OCI-LY7 (cell line): ENCODE measurements at regions of chr17 and their contacts with region 1.

Region 1: GRCh38 chr17:78421484-78422266 is 43.2 kb downstream of the PGS1 start:
- DNase-seq: peak; percentile 76
- H3K4me3 ChIP-seq: no peak overlapping the region
- H3K27ac ChIP-seq: no peak overlapping the region
- H3K4me1 ChIP-seq: no peaks in the 10 kb centered on the region
- CTCF ChIP-seq: peak; percentile 99

Region 2: DNA sequence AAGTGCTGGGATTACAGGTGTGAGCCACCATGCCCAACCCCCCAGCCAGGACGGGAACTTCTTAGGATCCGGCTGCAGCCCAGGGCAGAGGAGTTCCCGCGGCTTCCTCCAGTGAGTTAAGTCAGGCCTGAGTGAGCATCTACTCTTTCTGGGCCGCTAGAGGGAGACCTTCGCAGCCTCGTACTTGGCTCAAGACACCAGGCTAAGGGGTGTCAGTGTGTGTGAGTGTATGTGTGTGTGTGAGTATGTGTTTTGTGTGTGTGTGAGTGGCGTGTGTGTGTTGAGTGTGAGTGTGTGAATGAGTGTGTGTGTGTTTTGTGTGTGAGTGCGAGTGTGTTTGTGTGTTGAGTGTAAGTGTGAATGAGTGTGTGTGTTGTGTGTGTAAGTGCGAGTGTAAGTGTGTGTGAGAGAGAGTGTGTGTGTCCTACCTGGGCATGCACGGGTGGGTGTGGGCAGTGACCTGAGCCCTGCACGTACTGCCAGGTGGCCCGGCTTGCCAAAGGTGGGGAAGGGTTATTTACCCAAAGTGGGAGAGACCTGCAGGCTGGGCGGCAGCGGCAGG is 131.8 kb before region 1 on chr17:
- CTCF ChIA-PET with region 1: no interaction called
- POLR2A ChIA-PET with region 1: no interaction called
- intact Hi-C with region 1: loop called (anchors 1 kb)
- DNase-seq: peak; percentile 87
- H3K4me3 ChIP-seq: no peak overlapping the region
- H3K27ac ChIP-seq: no peak overlapping the region
- H3K4me1 ChIP-seq: no peaks in the 10 kb centered on the region
- CTCF ChIP-seq: peak; percentile 92

Region 3: DNA sequence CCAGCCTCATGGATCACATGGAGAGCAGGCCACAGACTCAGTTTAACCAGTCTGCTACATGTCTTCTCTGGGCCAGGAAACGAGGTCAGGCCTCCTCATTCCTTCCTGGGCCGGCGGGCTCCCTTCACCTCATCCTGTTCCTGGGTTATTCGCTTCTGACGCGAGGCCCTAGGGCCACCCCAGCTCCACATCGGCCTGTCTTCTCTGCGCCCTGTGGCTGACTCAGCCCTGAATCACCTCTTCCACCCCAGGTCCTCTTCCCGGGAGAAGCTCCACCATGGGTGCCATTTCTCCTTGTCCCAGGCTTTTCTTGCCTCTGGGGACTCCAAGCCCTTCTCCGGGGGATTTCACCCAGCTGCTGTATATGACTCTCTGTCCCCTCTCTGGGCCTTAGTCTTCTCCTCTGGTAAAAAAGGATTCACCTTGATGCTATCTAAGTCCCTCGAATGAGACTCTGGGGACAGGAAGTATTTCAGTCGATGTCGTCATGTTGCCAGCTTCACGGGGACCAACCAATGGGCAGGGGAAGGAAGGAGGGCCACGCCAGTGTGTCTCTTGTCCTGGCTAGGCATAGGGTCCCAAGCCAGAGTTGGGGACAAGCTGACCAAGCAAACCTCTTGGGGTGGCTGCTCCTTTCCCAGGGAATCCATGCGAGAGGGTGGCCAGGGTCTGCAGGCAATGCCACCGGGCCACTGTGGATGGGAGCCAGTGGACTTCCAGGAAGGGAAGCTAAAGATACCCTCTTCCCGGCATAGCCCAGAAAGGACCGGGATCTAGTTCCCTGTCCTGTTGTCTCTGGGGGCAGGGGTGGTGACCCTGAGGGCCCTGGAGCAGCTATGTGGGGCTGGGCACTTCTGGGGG is 120.5 kb before region 1 on chr17:
- CTCF ChIA-PET with region 1: no interaction called
- POLR2A ChIA-PET with region 1: interaction called, 10 read pairs
- intact Hi-C with region 1: no loop called
- DNase-seq: no peak
- H3K4me3 ChIP-seq: no peak overlapping the region
- H3K27ac ChIP-seq: no peak overlapping the region
- H3K4me1 ChIP-seq: no peaks in the 10 kb centered on the region
- CTCF ChIP-seq: no peak

Region 4: GRCh38 chr17:78360371-78361224 is 61.1 kb before region 1 on chr17:
- CTCF ChIA-PET with region 1: no interaction called
- POLR2A ChIA-PET with region 1: no interaction called
- intact Hi-C with region 1: loop called (anchors 1 kb)
- DNase-seq: peak; percentile 87
- H3K4me3 ChIP-seq: no peak overlapping the region
- H3K27ac ChIP-seq: no peak overlapping the region
- H3K4me1 ChIP-seq: peaks cover 24% of the 10 kb centered on the region
- CTCF ChIP-seq: peak; percentile 99

Region 5: DNA sequence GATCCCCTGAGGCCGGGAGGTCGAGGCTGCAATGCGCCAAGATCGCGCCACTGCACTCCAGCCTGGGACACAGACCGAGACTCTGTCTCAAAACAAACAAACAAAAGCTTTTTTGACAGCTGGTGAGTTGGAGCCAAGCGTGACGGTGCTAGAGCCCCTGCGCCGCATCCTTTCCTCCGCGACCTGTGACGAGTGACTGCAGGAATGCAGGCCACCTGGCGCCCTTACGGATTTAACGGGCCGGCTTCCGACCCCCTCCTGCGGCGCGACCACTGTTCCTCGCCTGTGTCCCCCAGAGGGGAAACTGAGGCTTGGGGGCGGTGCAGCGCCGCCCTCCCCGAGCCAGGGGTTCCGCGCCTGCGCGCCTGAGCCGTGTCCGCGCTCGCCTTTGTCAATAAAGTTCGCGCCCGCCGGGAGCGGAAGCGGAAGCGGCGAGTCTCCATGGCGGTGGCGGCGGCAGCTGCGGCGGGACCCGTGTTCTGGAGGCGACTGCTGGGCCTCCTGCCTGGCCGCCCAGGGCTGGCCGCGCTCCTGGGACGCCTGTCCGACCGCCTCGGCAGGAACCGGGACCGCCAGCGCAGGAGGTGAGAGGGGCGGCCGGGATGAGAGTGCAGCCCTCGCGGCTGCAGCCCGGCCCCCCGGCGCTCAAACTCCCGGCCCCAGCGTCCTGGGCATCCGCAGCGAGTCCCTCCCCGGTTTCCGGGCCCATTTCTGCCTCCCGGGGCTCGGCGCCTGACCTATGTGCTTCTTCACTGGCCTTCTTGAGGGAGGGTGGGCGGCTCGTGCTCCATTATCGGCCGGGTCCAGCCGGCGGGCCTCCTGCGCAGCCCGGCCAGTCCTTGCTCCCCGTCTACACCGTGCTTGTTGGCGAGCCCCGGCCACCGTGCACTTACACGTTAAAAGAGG is 43.2 kb before region 1 on chr17 and contains the start of gene PGS1:
- CTCF ChIA-PET with region 1: no interaction called
- POLR2A ChIA-PET with region 1: no interaction called
- intact Hi-C with region 1: loop called (anchors 5 kb)
- DNase-seq: peak; percentile 90
- H3K4me3 ChIP-seq: peak within 1 kb of the TSS; percentile 94
- H3K27ac ChIP-seq: peak within 1 kb of the TSS; percentile 13
- H3K4me1 ChIP-seq: peaks cover 33% of the 10 kb centered on the region
- CTCF ChIP-seq: 0 out of 2 replicates have a peak, but pooled peaks have one; percentile 17
- total RNA-seq, gene PGS1: 59.6 and 67.3 TPM in 2 replicates